Dendritic cell treated with granulocyte-macrophage colony-stimulating factor and Interleukin-4, amounts not matched to agents 40 ng/mL and 50 ng/mL, for 4 days (primary cell): ENCODE measurements at regions of chr1 and their contacts with region 1.

Region 1: DNA sequence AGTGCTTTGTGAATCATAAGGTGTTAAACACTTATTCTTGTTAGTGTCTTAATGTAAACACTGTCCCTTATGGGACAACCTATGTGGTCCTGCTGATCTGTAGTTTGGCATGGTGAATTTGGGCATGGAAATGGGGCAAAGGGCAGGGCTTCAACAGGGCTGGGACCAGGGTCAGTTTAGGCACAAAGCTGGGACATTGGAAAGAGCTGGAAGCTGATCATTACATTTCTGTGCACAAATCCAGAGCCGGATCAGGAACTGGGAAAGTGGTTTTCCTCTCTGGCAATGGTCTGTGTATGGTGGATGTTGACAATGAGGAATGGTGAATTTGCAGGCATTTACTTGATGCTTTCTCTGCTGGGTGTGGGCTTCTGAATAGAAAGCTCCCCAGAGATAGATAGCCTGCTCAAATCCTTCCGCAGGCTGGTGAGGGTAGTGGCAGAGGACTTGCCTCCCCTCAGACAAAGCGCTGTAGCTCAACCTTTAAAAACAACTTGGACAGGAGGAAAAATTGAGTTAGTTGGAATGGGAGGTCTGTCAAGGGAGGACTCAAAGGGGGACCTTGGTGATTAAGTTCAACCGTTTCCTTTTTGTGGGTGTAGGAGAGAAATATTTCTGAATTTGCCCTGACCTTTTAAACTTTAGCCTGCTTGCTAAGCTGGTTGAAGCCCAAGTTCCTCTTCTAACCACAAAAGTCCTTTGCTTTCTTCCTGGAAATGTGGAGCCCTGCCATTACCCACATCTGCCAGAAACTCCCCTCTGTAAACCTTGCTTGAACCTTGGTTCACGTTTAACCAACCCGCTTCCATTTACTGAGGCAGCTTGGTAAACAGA is 35.3 kb downstream of the HLX start:
- H3K4me3 Mint-ChIP-seq: peak overlapping the region; percentile 56
- H3K27ac Mint-ChIP-seq: peak overlapping the region; percentile 56
- H3K4me1 Mint-ChIP-seq: peaks cover 26% of the 10 kb centered on the region
- H3K27me3 Mint-ChIP-seq: peaks cover 24% of the 10 kb centered on the region

Region 2: GRCh38 chr1:220579317-220579716 is 335.2 kb before region 1 on chr1:
- intact Hi-C with region 1: no loop called
- H3K4me3 Mint-ChIP-seq: no peak overlapping the region
- H3K27ac Mint-ChIP-seq: no peak overlapping the region
- H3K4me1 Mint-ChIP-seq: no peaks in the 10 kb centered on the region
- H3K27me3 Mint-ChIP-seq: no peaks in the 10 kb centered on the region

Region 3: GRCh38 chr1:220604934-220605333 is 309.6 kb before region 1 on chr1:
- intact Hi-C with region 1: no loop called
- H3K4me3 Mint-ChIP-seq: no peak overlapping the region
- H3K27ac Mint-ChIP-seq: no peak overlapping the region
- H3K4me1 Mint-ChIP-seq: no peaks in the 10 kb centered on the region
- H3K27me3 Mint-ChIP-seq: no peaks in the 10 kb centered on the region

Region 4: DNA sequence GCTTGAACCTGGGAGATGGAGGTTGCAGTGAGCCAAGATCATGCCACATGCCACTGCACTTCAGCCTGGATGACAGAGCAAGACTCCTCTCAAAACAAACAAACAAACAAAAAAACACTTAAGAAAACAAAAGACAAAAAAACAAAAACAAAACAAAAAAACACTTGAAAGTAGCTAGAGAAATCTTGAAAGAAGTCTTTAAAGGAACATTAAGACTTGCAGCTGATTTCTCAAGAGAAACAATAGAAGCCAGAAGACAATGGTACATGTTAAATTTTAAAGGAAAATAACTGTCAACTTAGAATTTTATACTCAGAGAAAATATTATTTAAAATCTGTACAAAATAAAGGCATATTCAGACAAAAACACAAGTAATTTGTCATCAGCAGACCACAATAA is 36.1 kb after region 1 on chr1:
- intact Hi-C with region 1: loop called (anchors 5 kb)
- H3K4me3 Mint-ChIP-seq: no peak overlapping the region
- H3K27ac Mint-ChIP-seq: no peak overlapping the region
- H3K4me1 Mint-ChIP-seq: peaks cover 12% of the 10 kb centered on the region
- H3K27me3 Mint-ChIP-seq: peaks cover 7% of the 10 kb centered on the region